Right ventricle myocardium superior (tissue), 1 donor: ENCODE measurements at regions of chr18 and their contacts with region 1.

Region 1: DNA sequence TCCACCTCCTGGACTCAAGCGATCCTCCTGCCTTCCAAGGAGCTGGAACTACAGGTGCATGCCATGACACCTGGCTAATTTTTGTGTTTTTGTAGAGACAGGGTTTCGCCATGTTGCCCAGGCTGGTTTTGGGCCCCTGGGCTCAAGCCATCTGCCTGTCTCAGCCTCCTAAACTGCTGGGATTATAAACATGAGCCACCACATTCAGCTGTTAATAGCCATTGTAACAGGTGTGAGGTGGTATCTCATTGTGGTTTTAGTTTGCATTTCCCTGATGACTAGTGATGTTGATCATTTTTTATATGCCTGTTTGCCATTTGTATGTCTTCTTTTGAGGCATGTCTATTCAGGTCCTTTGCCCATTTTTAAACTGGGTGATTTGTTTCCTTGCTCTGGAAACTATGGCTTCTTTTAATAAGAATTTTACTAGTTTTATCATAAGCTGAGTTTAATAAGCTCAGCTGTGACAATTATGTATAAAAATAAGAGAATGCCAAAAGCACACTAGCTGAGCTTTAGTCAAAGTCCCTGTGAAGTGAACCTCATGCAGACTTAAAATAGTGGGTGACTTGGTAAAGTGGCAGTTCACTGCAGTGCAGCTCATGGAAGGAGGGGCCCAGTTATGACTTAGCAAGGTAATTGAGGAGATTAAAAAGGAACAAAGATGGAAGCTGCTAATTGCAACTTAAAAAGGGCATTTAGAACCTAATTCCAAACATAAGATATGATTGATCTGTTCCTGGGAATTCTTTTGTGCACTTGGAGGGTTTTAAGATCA is 465.1 kb downstream of the TGIF1 start:
- DNase-seq: no peak
- ATAC-seq: no peak

Region 2: GRCh38 chr18:3966985-3967856 is 52.2 kb after region 1 on chr18:
- intact Hi-C with region 1: loop called (anchors 5 kb)
- DNase-seq: peak; percentile 46
- ATAC-seq: peak; percentile 79